Caco-2 (cell line): ENCODE measurements at regions of chr4 and their contacts with region 1.

Region 1: DNA sequence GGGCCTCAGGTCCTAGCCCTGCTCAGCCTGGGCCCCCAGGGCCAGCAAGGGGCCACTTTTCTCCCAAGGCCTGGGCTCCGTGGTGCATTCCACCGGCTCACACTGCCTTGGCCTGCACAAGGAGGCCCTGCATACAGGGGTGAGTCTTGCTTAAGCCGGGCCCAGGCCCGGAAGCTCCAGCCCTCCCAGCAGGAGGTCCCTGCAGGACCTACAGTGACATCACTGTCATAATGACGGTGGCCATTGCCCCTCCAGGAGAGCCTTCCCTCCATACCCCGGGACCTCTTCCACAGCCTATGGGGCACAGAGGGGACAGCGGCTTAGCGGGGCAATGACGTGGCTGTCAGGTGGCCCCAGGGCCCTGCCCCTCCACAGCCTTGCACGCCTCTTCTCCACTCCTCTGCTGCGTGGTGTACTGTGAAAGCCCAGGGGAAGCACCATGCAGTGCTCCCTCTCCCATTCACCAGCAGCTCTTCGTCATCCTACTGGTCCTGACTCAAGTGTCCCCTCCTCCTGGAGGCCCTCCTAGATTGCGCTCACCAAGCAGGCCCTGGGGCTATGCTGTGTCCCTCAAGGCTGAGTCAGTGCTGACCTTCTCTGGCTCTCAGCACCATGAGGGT is 32.3 kb upstream of the AFAP1 start:
- DNase-seq: no peak
- H3K4me3 ChIP-seq: no peak overlapping the region
- H3K4me3 Mint-ChIP-seq: peak overlapping the region; percentile 56
- H3K27ac Mint-ChIP-seq: peak overlapping the region; percentile 97
- H3K4me1 ChIP-seq: peaks cover 55% of the 10 kb centered on the region
- H3K4me1 Mint-ChIP-seq: peaks cover 44% of the 10 kb centered on the region
- H3K27me3 ChIP-seq: no peaks in the 10 kb centered on the region
- H3K27me3 Mint-ChIP-seq: no peaks in the 10 kb centered on the region
- CTCF ChIP-seq: no peak

Region 2: GRCh38 chr4:7939377-7940108 is 32.4 kb before region 1 on chr4 and contains the start of gene AFAP1:
- CTCF ChIA-PET with region 1: interaction called, 3 read pairs
- POLR2A ChIA-PET with region 1: interaction called, 3 read pairs
- intact Hi-C with region 1: loop called (anchors 1 kb)
- DNase-seq: peak; percentile 87 to 92
- H3K4me3 ChIP-seq: peak within 1 kb of the TSS; percentile 93
- H3K4me3 Mint-ChIP-seq: peak within 1 kb of the TSS; percentile 81
- H3K27ac Mint-ChIP-seq: peak within 1 kb of the TSS; percentile 93
- H3K4me1 ChIP-seq: peaks cover 37% of the 10 kb centered on the region
- H3K4me1 Mint-ChIP-seq: peaks cover 42% of the 10 kb centered on the region
- H3K27me3 ChIP-seq: no peaks in the 10 kb centered on the region
- H3K27me3 Mint-ChIP-seq: no peaks in the 10 kb centered on the region
- CTCF ChIP-seq: no peak
- total RNA-seq, gene AFAP1: 27.3 and 27.6 TPM in 2 replicates